ENCODE measurements at regions of chr17 and their contacts with region 1.

Region 1: GRCh38 chr17:44123356-44124117 is at the start of gene HDAC5:
- DNase-seq: peak; percentile 92 to 96
- ATAC-seq: peak; percentile 95 to 97 (median 95)
- H3K4me3 ChIP-seq: peak within 1 kb of the TSS; percentile 86
- H3K4me3 Mint-ChIP-seq: peak within 1 kb of the TSS; percentile 91
- H3K27ac ChIP-seq: peak within 1 kb of the TSS; percentile 79
- H3K27ac Mint-ChIP-seq: peak within 1 kb of the TSS; percentile 86 to 97
- H3K4me1 ChIP-seq: peaks cover 25% of the 10 kb centered on the region
- H3K4me1 Mint-ChIP-seq: peaks cover 15 to 32% of the 10 kb centered on the region in 2 donors
- H3K27me3 ChIP-seq: no peaks in the 10 kb centered on the region
- H3K27me3 Mint-ChIP-seq: peaks cover 0 to 3% of the 10 kb centered on the region in 2 donors
- CTCF ChIP-seq: peak; percentile 42
- total RNA-seq, gene HDAC5: 79.2 to 100 (median 91.9) TPM

Region 2: GRCh38 chr17:44070455-44071197 is 52.9 kb before region 1 on chr17 and contains the start of gene G6PC3:
- intact Hi-C with region 1: loop called (anchors 5 kb)
- DNase-seq: peak; percentile 69 to 83
- ATAC-seq: peak; percentile 54 to 82 (median 73)
- H3K4me3 ChIP-seq: peak within 1 kb of the TSS; percentile 80
- H3K4me3 Mint-ChIP-seq: peak within 1 kb of the TSS; percentile 95
- H3K27ac ChIP-seq: peak within 1 kb of the TSS; percentile 84
- H3K27ac Mint-ChIP-seq: peak within 1 kb of the TSS; percentile 93
- H3K4me1 ChIP-seq: peaks cover 32% of the 10 kb centered on the region
- H3K4me1 Mint-ChIP-seq: peaks cover 38 to 39% of the 10 kb centered on the region in 2 donors
- H3K27me3 ChIP-seq: no peaks in the 10 kb centered on the region
- H3K27me3 Mint-ChIP-seq: no peaks in the 10 kb centered on the region
- CTCF ChIP-seq: no peak
- total RNA-seq, gene G6PC3: 18.2 to 21.7 (median 20.6) TPM

Region 3: DNA sequence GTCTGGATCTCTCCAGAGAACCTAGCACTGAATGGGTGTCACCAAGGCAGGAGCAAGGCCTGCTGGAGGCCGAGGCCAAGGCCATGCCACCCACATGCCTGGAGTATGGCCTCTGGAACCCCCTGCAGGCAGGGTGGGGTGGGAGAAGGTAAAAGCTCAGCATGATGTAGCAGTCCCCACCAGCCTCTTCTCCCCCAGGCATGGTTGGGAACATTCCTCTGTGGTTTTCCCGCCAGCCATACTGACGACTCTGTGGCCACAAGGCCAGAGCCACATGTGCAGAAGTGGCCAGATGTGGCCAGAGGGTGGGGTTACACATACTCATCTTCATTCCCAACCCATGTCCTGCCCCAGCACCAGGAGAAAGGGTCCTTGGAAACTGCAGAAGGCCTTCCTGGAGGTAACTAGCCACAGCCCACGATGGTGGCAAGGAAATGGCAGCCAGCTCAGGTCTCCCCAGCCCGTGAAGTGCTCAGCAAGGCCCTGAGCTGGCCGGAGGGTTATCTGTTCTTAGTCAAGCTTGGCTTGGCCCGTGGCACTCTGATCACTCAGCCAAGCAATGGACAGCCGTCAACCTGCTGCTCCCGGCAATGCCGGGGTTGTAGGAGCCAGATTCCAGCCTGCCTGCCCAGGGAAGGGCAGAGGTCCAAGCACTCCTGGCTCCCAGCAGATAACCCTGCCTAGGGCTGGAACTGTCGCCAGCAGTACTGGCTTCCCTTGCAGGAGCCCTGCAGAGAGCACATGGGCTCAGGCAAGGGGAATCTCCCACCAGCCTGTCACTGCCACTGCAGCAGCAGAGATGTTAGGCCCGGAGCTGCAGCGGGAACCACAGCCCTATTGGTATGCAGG is 26.2 kb before region 1 on chr17:
- intact Hi-C with region 1: no loop called
- DNase-seq: no peak
- ATAC-seq: peak in 2 of 3 donors; percentile 12 to 14
- H3K4me3 ChIP-seq: no peak overlapping the region
- H3K4me3 Mint-ChIP-seq: no peak overlapping the region
- H3K27ac ChIP-seq: no peak overlapping the region
- H3K27ac Mint-ChIP-seq: peak overlapping the region in 1 of 2 donors; percentile 16
- H3K4me1 ChIP-seq: peaks cover 30% of the 10 kb centered on the region
- H3K4me1 Mint-ChIP-seq: peaks cover 5 to 20% of the 10 kb centered on the region in 2 donors
- H3K27me3 ChIP-seq: no peaks in the 10 kb centered on the region
- H3K27me3 Mint-ChIP-seq: no peaks in the 10 kb centered on the region
- CTCF ChIP-seq: no peak

Region 4: DNA sequence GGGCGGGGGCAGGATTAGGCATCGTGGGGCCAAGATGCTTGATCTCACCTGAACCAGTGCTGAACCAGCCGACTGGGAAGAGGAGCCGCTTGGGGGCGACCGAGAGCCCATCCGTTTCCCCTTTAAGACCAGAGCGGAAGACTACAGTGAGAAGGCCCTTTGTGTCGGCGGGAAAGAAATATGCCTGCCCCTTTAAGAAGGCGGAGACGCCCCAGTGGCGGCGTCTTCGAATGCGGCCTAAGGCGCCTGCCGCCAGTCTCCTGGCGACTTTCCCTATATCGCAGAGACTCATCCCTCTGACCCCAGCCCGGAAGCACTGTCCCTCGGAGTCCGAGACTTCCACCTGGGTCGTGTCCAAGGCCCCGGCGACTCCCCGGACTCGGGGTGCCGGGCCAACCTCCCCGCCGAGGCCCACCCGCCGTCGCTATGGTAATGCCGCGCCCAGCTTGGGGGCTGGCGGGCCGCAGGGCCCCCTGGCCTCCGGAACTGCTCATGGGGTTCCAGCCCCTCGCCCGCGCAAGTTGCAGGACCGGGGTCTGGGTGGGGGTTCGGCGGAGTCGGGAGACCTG is 18.3 kb after region 1 on chr17 and contains the start of gene HROB:
- intact Hi-C with region 1: loop called (anchors 1 kb)
- DNase-seq: peak; percentile 98 to 99
- ATAC-seq: peak; percentile 97 to 99 (median 97)
- H3K4me3 ChIP-seq: peak within 1 kb of the TSS; percentile 53
- H3K4me3 Mint-ChIP-seq: peak within 1 kb of the TSS; percentile 83
- H3K27ac ChIP-seq: peak within 1 kb of the TSS; percentile 73
- H3K27ac Mint-ChIP-seq: peak within 1 kb of the TSS; percentile 73 to 83
- H3K4me1 ChIP-seq: peaks cover 15% of the 10 kb centered on the region
- H3K4me1 Mint-ChIP-seq: peaks cover 0 to 6% of the 10 kb centered on the region in 2 donors
- H3K27me3 ChIP-seq: peaks cover 9% of the 10 kb centered on the region
- H3K27me3 Mint-ChIP-seq: peaks cover 11 to 14% of the 10 kb centered on the region in 2 donors
- CTCF ChIP-seq: peak; percentile 88
- total RNA-seq, gene HROB: 1.9 to 4.4 (median 2.4) TPM

Region 5: GRCh38 chr17:44186307-44187130 is 63.0 kb after region 1 on chr17 and contains the start of gene TMUB2:
- intact Hi-C with region 1: loop called (anchors 5 kb)
- DNase-seq: peak; percentile 99 to 100
- ATAC-seq: peak; percentile 94 to 100 (median 95)
- H3K4me3 ChIP-seq: peak within 1 kb of the TSS; percentile 90
- H3K4me3 Mint-ChIP-seq: peak within 1 kb of the TSS; percentile 100
- H3K27ac ChIP-seq: peak within 1 kb of the TSS; percentile 97
- H3K27ac Mint-ChIP-seq: peak within 1 kb of the TSS; percentile 92 to 99
- H3K4me1 ChIP-seq: peaks cover 25% of the 10 kb centered on the region
- H3K4me1 Mint-ChIP-seq: peaks cover 35 to 44% of the 10 kb centered on the region in 2 donors
- H3K27me3 ChIP-seq: no peaks in the 10 kb centered on the region
- H3K27me3 Mint-ChIP-seq: no peaks in the 10 kb centered on the region
- CTCF ChIP-seq: no peak
- total RNA-seq, gene TMUB2: 40.4 to 48.2 (median 41.0) TPM

Region 6: DNA sequence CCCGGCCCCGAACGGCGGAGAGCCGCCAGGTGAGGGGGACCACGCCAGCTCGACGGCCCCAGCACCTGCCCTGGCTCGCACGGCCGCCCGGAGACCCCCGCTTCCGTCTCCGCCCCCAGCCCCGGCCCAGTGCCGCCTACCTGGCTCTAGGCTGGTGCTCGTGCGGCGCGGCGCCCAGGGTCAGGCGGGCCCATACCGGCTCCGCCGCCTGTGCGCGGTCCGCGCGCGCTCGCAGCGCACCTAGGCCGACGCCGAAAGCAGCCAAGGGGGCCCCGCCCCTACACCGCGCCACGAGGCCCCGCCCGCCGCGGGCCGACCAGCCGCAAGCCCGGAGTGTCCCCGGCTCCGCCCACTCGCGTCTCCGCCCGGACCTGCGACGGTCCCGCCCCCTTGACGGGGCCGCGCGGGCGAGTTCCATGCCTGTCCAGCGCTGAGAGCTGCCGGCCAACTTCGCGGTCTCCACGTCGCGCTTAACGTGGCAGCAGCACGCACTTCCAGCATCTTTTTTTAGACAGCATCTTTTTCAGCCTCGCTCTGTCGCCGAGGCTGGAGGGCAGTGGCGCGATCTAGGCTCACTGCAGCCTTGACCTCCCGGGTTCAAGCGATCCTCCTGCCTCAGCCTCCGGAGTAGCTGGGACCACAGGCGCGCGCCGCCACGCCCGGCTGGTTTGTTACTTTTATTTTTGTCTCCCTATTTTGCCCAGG is 201.2 kb after region 1 on chr17 and contains the start of gene SLC25A39:
- intact Hi-C with region 1: loop called (anchors 5 kb)
- DNase-seq: peak; percentile 97 to 99
- ATAC-seq: peak; percentile 72 to 92 (median 76)
- H3K4me3 ChIP-seq: peak within 1 kb of the TSS; percentile 91
- H3K4me3 Mint-ChIP-seq: peak within 1 kb of the TSS; percentile 92
- H3K27ac ChIP-seq: peak within 1 kb of the TSS; percentile 99
- H3K27ac Mint-ChIP-seq: peak within 1 kb of the TSS; percentile 97 to 98
- H3K4me1 ChIP-seq: peaks cover 40% of the 10 kb centered on the region
- H3K4me1 Mint-ChIP-seq: peaks cover 5 to 26% of the 10 kb centered on the region in 2 donors
- H3K27me3 ChIP-seq: no peaks in the 10 kb centered on the region
- H3K27me3 Mint-ChIP-seq: no peaks in the 10 kb centered on the region
- CTCF ChIP-seq: no peak
- total RNA-seq, gene SLC25A39: 82.4 to 105 (median 97.9) TPM

Region 7: GRCh38 chr17:44556832-44557606 is 433.5 kb after region 1 on chr17 and contains the start of gene FZD2:
- intact Hi-C with region 1: loop called (anchors 2 kb)
- DNase-seq: peak; percentile 63 to 70
- ATAC-seq: peak; percentile 75 to 85 (median 84)
- H3K4me3 ChIP-seq: peak within 1 kb of the TSS; percentile 74
- H3K4me3 Mint-ChIP-seq: peak within 1 kb of the TSS; percentile 98
- H3K27ac ChIP-seq: peak within 1 kb of the TSS; percentile 67
- H3K27ac Mint-ChIP-seq: peak within 1 kb of the TSS; percentile 68 to 88
- H3K4me1 ChIP-seq: peaks cover 28% of the 10 kb centered on the region
- H3K4me1 Mint-ChIP-seq: peaks cover 19 to 39% of the 10 kb centered on the region in 2 donors
- H3K27me3 ChIP-seq: peaks cover 4% of the 10 kb centered on the region
- H3K27me3 Mint-ChIP-seq: peaks cover 39 to 42% of the 10 kb centered on the region in 2 donors
- CTCF ChIP-seq: no peak
- total RNA-seq, gene FZD2: 0.27 to 0.55 (median 0.33) TPM